Uterus (tissue), 4 donors: ENCODE measurements at regions of chr3 and their contacts with region 1.

Region 1: GRCh38 chr3:126718561-126719445 is 14.8 kb downstream of the CHCHD6 start:
- DNase-seq: no peak
- H3K4me3 ChIP-seq: no peak overlapping the region
- H3K27ac ChIP-seq: no peak overlapping the region
- H3K4me1 ChIP-seq: no peaks in the 10 kb centered on the region
- H3K27me3 ChIP-seq: no peaks in the 10 kb centered on the region
- CTCF ChIP-seq: no peak
- POLR2A ChIP-seq: no peak

Region 2: DNA sequence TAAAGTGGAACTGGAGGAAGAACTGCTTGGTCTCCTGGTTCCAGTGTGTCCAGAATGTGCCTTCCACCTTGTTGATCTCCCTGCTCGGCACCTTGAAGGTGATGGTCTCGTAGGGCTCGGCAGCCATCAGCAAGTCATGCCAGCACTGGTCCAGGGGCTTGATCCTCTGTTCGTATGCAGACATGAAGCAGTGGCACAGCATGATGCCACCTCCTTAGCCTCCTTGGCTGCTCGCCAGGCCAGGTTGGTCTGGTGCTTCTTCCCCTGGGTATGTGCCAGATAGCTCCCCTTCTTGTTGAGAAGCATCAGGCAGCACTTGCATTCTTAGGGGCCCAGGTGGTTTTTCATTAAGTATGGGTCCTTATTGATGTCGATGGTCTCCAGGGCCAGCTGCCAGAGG is 46.1 kb before region 1 on chr3:
- intact Hi-C with region 1: loop called (anchors 2 kb)
- DNase-seq: no peak
- H3K4me3 ChIP-seq: no peak overlapping the region
- H3K27ac ChIP-seq: no peak overlapping the region
- H3K4me1 ChIP-seq: no peaks in the 10 kb centered on the region
- H3K27me3 ChIP-seq: no peaks in the 10 kb centered on the region
- CTCF ChIP-seq: no peak
- POLR2A ChIP-seq: no peak